ENCODE measurements at regions of chr6 and their contacts with region 1.

Region 1: DNA sequence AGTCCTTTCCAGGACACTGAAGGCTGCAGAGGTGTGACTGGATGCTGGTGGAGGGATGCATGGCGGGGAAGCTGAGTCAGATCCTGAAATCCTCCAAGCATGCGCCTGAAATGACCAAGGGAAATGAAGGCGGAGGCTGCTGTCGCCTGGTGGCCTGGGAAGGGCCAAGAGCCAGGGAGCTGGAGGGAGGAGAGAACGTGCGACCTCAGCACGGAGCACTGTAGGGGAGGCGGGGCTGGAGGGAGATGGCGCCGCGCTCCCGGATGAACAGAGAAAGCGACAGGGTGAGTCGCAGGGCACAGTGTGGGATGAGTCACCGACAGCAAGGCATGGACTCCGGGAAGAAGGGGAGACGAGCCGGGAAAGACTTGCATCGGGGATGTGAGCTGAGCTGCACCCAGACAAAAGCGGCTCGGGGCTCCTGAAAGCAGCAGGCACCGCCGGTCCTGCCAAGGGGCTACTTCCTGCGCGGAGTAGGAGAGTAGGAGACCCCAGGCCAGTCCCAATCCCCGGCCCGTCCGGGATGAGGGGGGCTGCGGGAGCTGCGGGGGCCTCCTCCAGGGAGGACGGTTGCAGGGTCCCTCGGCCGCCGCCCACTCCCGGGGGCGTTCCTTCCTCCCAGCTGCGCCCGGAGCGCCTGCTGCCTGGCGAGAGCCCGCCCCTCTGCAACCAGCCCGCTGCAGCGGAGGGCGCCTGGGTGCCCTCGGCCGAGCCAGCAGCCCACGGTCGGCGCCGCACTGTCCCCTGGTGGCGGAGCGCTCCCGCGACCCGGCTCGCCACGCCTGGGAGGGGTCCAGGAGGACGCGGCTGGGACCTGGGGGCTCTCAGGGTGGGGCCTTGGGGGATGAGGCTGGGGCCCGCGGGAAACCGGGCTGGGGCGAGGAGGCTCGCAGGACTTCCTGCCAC is 11.0 kb upstream of the NQO2 start:
- DNase-seq: peak; percentile 89
- ATAC-seq: peak; percentile 81
- H3K4me3 Mint-ChIP-seq: peak overlapping the region; percentile 87
- H3K27ac Mint-ChIP-seq: peak overlapping the region; percentile 99
- H3K4me1 Mint-ChIP-seq: peaks cover 20% of the 10 kb centered on the region
- H3K27me3 Mint-ChIP-seq: no peaks in the 10 kb centered on the region

Region 2: DNA sequence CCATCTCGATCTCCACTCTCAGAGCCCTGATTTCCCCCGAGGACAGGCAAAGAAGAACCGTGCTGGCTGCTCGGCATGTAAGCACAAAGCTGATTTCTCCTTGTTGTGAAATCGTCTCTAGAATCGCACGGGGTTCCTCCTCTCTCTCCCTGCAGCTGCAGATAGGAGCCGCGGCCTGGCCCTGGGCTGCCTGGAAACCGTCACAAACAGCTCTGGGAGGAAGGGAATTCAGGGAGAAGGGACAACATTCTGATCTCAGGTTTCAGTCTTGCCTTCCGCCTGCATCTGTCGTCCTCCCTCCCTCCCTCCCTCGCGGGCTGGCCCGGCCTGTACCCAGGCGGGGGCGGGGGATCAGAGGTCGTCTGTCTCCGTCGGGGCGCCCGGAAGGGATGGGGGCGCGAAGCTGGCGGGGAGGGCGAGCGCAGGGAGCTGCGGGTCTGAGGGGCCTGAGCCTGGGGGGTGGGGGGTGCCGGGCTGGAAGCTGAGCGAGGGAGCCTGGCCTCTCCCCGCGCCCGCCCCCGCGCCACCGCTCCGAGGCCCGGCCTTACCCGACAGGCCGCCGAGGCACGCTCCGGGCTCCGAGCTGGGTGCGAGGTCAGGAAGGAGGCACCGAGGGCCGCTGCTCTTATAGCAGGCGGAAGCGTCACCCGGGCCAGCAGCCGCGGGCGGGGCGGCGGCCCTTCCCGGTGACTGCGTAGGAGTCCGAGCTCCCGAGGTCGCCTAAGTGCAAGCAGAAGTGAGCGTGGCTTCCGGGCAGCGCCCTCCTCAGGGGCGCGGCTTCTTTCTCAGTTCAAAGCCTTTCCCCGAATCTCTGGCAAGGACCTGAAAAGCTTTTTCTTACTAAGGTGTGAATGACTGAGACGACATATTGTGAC is 147.2 kb before region 1 on chr6 and contains the start of gene SERPINB1:
- CTCF ChIA-PET with region 1: interaction called, 50 read pairs
- POLR2A ChIA-PET with region 1: interaction called, 12 read pairs
- intact Hi-C with region 1: loop called (anchors 1 kb)
- DNase-seq: peak; percentile 96
- ATAC-seq: peak; percentile 86
- H3K4me3 Mint-ChIP-seq: peak within 1 kb of the TSS; percentile 96
- H3K27ac Mint-ChIP-seq: peak within 1 kb of the TSS; percentile 91
- H3K4me1 Mint-ChIP-seq: peaks cover 67% of the 10 kb centered on the region
- H3K27me3 Mint-ChIP-seq: no peaks in the 10 kb centered on the region
- total RNA-seq, gene SERPINB1: 200 to 243 TPM

Region 3: GRCh38 chr6:2900821-2901644 is 87.6 kb before region 1 on chr6:
- CTCF ChIA-PET with region 1: interaction called, 3 read pairs
- POLR2A ChIA-PET with region 1: no interaction called
- intact Hi-C with region 1: loop called in 1 of 2 experiments (anchors 1 kb)
- DNase-seq: peak; percentile 26
- ATAC-seq: no peak
- H3K4me3 Mint-ChIP-seq: peak overlapping the region; percentile 91
- H3K27ac Mint-ChIP-seq: peak overlapping the region; percentile 93
- H3K4me1 Mint-ChIP-seq: peaks cover 45% of the 10 kb centered on the region
- H3K27me3 Mint-ChIP-seq: no peaks in the 10 kb centered on the region

Region 4: GRCh38 chr6:2971420-2972218 is 17.1 kb before region 1 on chr6 and contains the start of gene SERPINB6:
- CTCF ChIA-PET with region 1: interaction called, 27 read pairs
- POLR2A ChIA-PET with region 1: interaction called, 3 read pairs
- intact Hi-C with region 1: loop called (anchors 1 kb)
- DNase-seq: peak; percentile 55
- ATAC-seq: peak; percentile 41
- H3K4me3 Mint-ChIP-seq: peak within 1 kb of the TSS; percentile 76
- H3K27ac Mint-ChIP-seq: peak within 1 kb of the TSS; percentile 83
- H3K4me1 Mint-ChIP-seq: peaks cover 40% of the 10 kb centered on the region
- H3K27me3 Mint-ChIP-seq: peaks cover 31% of the 10 kb centered on the region
- total RNA-seq, gene SERPINB6: 36.2 to 41.3 TPM

Region 5: GRCh38 chr6:3052481-3053230 is 64.0 kb after region 1 on chr6:
- CTCF ChIA-PET with region 1: interaction called, 10 read pairs
- POLR2A ChIA-PET with region 1: no interaction called
- intact Hi-C with region 1: no loop called
- DNase-seq: no peak
- ATAC-seq: no peak
- H3K4me3 Mint-ChIP-seq: peak overlapping the region; percentile 69
- H3K27ac Mint-ChIP-seq: no peak overlapping the region
- H3K4me1 Mint-ChIP-seq: peaks cover 15% of the 10 kb centered on the region
- H3K27me3 Mint-ChIP-seq: no peaks in the 10 kb centered on the region

Region 6: GRCh38 chr6:3162565-3163247 is 174.0 kb after region 1 on chr6:
- CTCF ChIA-PET with region 1: no interaction called
- POLR2A ChIA-PET with region 1: no interaction called
- intact Hi-C with region 1: no loop called
- DNase-seq: peak; percentile 74
- ATAC-seq: peak; percentile 84
- H3K4me3 Mint-ChIP-seq: peak overlapping the region; percentile 66
- H3K27ac Mint-ChIP-seq: peak overlapping the region; percentile 47
- H3K4me1 Mint-ChIP-seq: peaks cover 30% of the 10 kb centered on the region
- H3K27me3 Mint-ChIP-seq: peaks cover 28% of the 10 kb centered on the region

Region 7: GRCh38 chr6:3258720-3259490 is 270.2 kb after region 1 on chr6 and contains the start of gene PSMG4:
- CTCF ChIA-PET with region 1: no interaction called
- POLR2A ChIA-PET with region 1: no interaction called
- intact Hi-C with region 1: loop called in 1 of 2 experiments (anchors 2 kb)
- DNase-seq: peak; percentile 97
- ATAC-seq: peak; percentile 83
- H3K4me3 Mint-ChIP-seq: peak within 1 kb of the TSS; percentile 89
- H3K27ac Mint-ChIP-seq: peak within 1 kb of the TSS; percentile 92
- H3K4me1 Mint-ChIP-seq: peaks cover 35% of the 10 kb centered on the region
- H3K27me3 Mint-ChIP-seq: peaks cover 3% of the 10 kb centered on the region
- total RNA-seq, gene PSMG4: 22.2 to 23.2 TPM